ENCODE measurements at regions of chr7 and their contacts with region 1.

Region 1: GRCh38 chr7:87416682-87417587 is 58.5 kb downstream of the ABCB4 start:
- DNase-seq: peak; percentile 79
- ATAC-seq: peak; percentile 64
- H3K4me3 Mint-ChIP-seq: no peak overlapping the region
- H3K27ac Mint-ChIP-seq: no peak overlapping the region
- H3K4me1 Mint-ChIP-seq: no peaks in the 10 kb centered on the region
- H3K27me3 Mint-ChIP-seq: no peaks in the 10 kb centered on the region

Region 2: DNA sequence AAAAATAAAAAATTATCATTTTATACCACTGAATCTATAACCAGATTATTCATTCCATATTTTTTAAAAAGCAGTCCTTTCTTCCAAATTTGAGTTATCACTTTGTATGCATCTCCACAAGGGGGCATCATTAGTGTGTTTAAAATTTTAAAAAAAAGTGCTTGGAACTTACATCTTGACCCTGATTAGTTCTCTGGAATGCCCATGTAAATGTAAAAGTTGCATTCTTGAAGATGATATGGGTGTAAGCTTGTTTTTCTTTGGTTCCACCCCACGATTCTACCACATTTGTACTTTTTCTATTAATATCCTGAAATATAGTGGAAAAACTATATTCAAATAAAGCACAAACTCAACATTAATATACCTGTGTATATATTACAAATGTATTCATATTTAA is 502.4 kb before region 1 on chr7:
- CTCF ChIA-PET with region 1: interaction called, 3 read pairs
- POLR2A ChIA-PET with region 1: no interaction called
- intact Hi-C with region 1: loop called in 1 of 2 experiments (anchors 2 kb)
- DNase-seq: no peak
- ATAC-seq: no peak
- H3K4me3 Mint-ChIP-seq: no peak overlapping the region
- H3K27ac Mint-ChIP-seq: no peak overlapping the region
- H3K4me1 Mint-ChIP-seq: peaks cover 7% of the 10 kb centered on the region
- H3K27me3 Mint-ChIP-seq: peaks cover 2% of the 10 kb centered on the region

Region 3: GRCh38 chr7:86926732-86927131 is 490.2 kb before region 1 on chr7:
- CTCF ChIA-PET with region 1: interaction called, 10 read pairs
- POLR2A ChIA-PET with region 1: no interaction called
- intact Hi-C with region 1: loop called (anchors 2 to 5 kb)
- DNase-seq: peak; percentile 43
- ATAC-seq: peak; percentile 19
- H3K4me3 Mint-ChIP-seq: no peak overlapping the region
- H3K27ac Mint-ChIP-seq: no peak overlapping the region
- H3K4me1 Mint-ChIP-seq: peaks cover 8% of the 10 kb centered on the region
- H3K27me3 Mint-ChIP-seq: peaks cover 7% of the 10 kb centered on the region

Region 4: GRCh38 chr7:87312215-87312865 is 104.6 kb before region 1 on chr7:
- CTCF ChIA-PET with region 1: interaction called, 182 read pairs
- POLR2A ChIA-PET with region 1: no interaction called
- intact Hi-C with region 1: loop called (anchors 1 kb)
- DNase-seq: peak; percentile 76
- ATAC-seq: peak; percentile 86
- H3K4me3 Mint-ChIP-seq: no peak overlapping the region
- H3K27ac Mint-ChIP-seq: no peak overlapping the region
- H3K4me1 Mint-ChIP-seq: peaks cover 11% of the 10 kb centered on the region
- H3K27me3 Mint-ChIP-seq: no peaks in the 10 kb centered on the region

Region 5: DNA sequence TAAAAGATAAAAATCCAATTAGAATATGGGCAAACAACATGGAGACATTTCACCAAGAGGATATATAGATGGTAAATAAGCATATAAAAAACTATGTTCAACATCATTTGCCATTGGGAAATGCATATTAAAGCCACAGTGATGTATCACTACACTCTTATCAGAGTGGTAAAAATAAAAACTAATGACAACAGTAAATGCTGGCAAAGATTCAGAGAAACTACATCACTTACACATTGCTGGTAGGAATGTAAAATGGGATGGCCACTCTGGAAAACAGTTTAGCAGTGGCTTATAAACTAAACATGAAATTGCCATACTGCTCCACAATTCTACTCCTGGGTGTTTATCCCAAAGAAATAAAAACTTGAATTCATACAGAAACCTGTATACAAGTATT is 12.3 kb before region 1 on chr7:
- CTCF ChIA-PET with region 1: interaction called, 50 read pairs
- POLR2A ChIA-PET with region 1: no interaction called
- intact Hi-C with region 1: no loop called
- DNase-seq: no peak
- ATAC-seq: no peak
- H3K4me3 Mint-ChIP-seq: no peak overlapping the region
- H3K27ac Mint-ChIP-seq: no peak overlapping the region
- H3K4me1 Mint-ChIP-seq: no peaks in the 10 kb centered on the region
- H3K27me3 Mint-ChIP-seq: no peaks in the 10 kb centered on the region

Region 6: DNA sequence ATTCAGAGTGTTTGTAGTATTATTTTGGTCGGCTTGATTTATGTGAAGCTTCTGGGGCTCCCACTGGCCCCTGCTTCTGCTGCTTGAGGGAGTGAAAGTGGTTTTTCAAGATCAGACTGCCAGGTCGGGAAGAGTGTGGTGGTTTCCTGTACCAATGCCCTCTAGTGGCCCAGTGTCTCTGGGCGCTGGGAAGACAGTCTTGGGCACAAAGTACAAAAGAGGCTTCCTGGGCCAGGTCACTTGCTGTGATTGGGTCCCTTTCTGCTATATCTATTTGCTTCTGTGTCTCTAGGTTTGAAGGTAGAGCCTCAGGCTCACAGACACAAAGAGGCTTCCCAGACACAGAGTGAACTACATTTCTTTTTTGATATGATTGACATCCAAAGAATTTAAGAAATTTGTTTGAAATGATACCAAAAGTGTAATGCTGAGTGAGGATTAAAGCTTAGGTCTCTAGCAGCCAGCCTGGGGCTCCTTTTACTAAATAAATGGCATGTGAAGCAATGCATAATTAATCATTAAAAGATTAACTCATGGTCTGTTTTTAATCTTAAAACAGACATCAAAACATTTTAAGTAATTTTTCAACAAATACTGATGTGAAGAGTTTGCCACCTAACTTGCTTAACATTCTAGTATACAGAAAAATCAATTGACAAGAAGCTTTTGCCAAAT is 147.5 kb after region 1 on chr7:
- CTCF ChIA-PET with region 1: no interaction called
- POLR2A ChIA-PET with region 1: no interaction called
- intact Hi-C with region 1: no loop called
- DNase-seq: peak; percentile 46
- ATAC-seq: peak; percentile 72
- H3K4me3 Mint-ChIP-seq: no peak overlapping the region
- H3K27ac Mint-ChIP-seq: no peak overlapping the region
- H3K4me1 Mint-ChIP-seq: peaks cover 4% of the 10 kb centered on the region
- H3K27me3 Mint-ChIP-seq: no peaks in the 10 kb centered on the region

Region 7: DNA sequence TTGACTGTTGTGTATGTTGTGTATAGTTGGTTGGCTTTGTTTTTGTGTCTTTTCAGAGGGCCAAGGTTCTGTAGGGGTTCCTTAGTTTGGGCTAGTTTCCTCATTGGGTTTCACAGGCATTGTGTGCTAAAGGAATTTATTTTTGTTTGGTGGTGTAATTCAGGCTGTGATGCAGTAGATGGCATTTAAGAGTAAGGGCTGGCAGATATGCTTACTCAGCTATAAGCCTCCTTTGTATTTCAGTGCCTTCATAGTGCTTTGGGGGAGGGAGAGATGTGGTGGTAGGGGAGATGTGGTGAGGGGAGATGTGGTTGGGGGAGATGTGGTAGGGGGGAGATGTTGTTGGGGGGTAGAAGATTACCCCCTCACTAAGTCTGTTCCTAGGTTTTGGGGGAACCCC is 367.5 kb after region 1 on chr7:
- CTCF ChIA-PET with region 1: no interaction called
- POLR2A ChIA-PET with region 1: no interaction called
- intact Hi-C with region 1: no loop called
- DNase-seq: no peak
- ATAC-seq: no peak
- H3K4me3 Mint-ChIP-seq: no peak overlapping the region
- H3K27ac Mint-ChIP-seq: no peak overlapping the region
- H3K4me1 Mint-ChIP-seq: no peaks in the 10 kb centered on the region
- H3K27me3 Mint-ChIP-seq: peaks cover 3% of the 10 kb centered on the region

Region 8: DNA sequence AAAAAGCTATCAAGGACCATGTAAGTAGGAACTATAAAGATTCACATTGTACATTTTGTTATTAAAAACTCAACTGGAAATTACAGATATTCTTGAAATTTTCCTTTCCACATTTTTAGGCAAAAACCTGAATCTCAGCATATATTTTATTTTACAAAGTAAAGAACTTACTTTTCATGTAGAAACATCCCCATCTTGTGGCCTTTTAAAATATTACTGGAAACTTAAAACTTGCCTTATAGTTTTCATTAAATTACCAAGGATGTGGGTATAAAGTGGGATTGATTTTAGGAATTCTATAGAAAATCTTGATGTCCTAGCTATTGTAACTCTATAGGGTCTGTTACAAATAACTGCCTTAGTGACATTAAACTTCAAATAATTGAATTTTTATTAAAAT is 469.9 kb after region 1 on chr7:
- CTCF ChIA-PET with region 1: interaction called, 3 read pairs
- POLR2A ChIA-PET with region 1: no interaction called
- intact Hi-C with region 1: loop called in 1 of 2 experiments (anchors 5 kb)
- DNase-seq: no peak
- ATAC-seq: no peak
- H3K4me3 Mint-ChIP-seq: no peak overlapping the region
- H3K27ac Mint-ChIP-seq: no peak overlapping the region
- H3K4me1 Mint-ChIP-seq: peaks cover 6% of the 10 kb centered on the region
- H3K27me3 Mint-ChIP-seq: no peaks in the 10 kb centered on the region

Measured in activated CD4-positive, alpha-beta T cell treated with anti-CD3 and anti-CD28 coated beads for 36 hours (primary cell).